ENCODE measurements at regions of chr10 and their contacts with region 1.

Region 1: GRCh38 chr10:102009801-102010425 is 46.1 kb downstream of the ARMH3 start:
- DNase-seq: no peak
- H3K4me3 ChIP-seq: no peak overlapping the region
- H3K27ac ChIP-seq: peak overlapping the region in 4 of 8 donors; percentile 7 to 37 (median 18)
- H3K4me1 ChIP-seq: peaks cover 4 to 61% (median 26%) of the 10 kb centered on the region in 6 donors
- H3K27me3 ChIP-seq: no peaks in the 10 kb centered on the region
- CTCF ChIP-seq: peak; percentile 78 to 92 (median 88)
- POLR2A ChIP-seq: no peak

Region 2: GRCh38 chr10:101840741-101841453 is 169.0 kb before region 1 on chr10:
- intact Hi-C with region 1: loop called (anchors 5 kb)
- DNase-seq: peak; percentile 96
- H3K4me3 ChIP-seq: peak overlapping the region in 7 of 8 donors; percentile 36 to 71 (median 47)
- H3K27ac ChIP-seq: peak overlapping the region in 2 of 8 donors; percentile 3 to 22
- H3K4me1 ChIP-seq: peaks cover 26 to 92% (median 56%) of the 10 kb centered on the region in 6 donors
- H3K27me3 ChIP-seq: peaks cover 0 to 7% (median 0%) of the 10 kb centered on the region in 7 donors
- CTCF ChIP-seq: peak; percentile 88 to 98 (median 95)
- POLR2A ChIP-seq: no peak

Region 3: DNA sequence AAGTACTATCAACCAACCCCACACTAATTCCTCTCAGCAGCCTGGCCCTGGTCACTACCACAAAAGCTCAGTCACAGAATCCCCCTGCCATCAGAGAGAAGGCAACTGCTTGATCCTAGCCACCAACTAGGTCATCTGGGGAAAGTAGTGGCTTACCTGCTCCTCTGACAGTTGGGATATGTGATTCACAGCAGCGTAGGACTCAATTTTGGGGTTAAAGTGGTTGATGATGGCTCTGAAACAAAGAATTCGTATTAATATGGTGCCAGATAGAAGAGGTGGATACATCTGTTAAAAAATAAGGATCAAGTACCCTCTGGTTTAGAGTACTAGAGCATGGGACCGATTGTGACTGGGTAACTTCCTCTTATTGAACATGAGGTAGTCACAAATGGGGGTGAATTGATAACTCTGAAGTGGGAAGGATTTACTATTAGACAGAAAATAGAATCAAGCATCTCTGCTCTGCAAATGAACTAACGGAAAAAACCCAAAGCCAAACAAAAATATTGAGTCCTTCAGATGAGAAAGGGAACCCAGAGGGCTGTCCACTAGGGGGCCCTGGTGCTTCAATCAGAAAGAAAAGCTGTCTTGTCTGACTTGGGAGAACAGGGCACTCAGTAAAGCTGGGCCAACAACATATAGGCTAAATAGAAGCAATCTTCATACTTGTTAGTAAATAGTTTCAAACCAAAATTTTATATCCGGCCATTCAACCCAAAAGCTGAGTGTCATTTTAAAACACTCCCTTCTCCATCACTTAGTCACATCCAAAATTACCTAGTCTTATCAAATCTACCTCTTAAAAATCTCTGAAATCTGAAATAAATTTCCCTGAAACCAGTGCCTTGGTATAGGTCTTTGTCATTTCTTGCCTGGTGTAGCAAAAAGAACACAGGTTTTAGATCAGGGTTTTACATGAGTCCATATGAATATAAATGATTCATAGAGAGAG is 120.4 kb before region 1 on chr10:
- intact Hi-C with region 1: loop called (anchors 5 kb)
- DNase-seq: peak; percentile 84
- H3K4me3 ChIP-seq: no peak overlapping the region
- H3K27ac ChIP-seq: peak overlapping the region in 3 of 8 donors; percentile 7 to 64 (median 19)
- H3K4me1 ChIP-seq: peaks cover 0 to 51% (median 14%) of the 10 kb centered on the region in 6 donors
- H3K27me3 ChIP-seq: no peaks in the 10 kb centered on the region
- CTCF ChIP-seq: peak; percentile 55 to 86 (median 76)
- POLR2A ChIP-seq: no peak

Region 4: DNA sequence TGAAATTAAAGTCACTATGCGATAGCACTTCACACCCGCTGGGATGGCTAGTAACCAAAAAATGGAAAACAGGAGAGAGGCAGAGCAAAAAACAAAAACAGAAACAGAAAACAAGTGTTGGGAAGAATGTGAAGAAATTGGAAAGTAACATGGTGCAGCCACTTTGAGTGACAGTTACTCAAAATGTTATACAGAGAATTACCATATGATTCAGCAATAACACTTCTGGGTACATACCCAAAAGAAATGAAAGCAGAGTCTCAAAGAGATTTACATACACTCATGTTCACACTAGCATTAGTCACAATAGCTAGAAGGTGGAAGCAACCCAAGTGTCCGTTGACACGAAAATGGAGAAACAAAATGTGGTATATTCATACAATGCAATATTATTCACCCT is 77.7 kb before region 1 on chr10:
- intact Hi-C with region 1: no loop called
- DNase-seq: no peak
- H3K4me3 ChIP-seq: no peak overlapping the region
- H3K27ac ChIP-seq: no peak overlapping the region
- H3K4me1 ChIP-seq: peaks cover 0 to 23% (median 1%) of the 10 kb centered on the region in 6 donors
- H3K27me3 ChIP-seq: no peaks in the 10 kb centered on the region
- CTCF ChIP-seq: no peak
- POLR2A ChIP-seq: no peak

Region 5: GRCh38 chr10:102114861-102115618 is 105.1 kb after region 1 on chr10:
- intact Hi-C with region 1: no loop called
- DNase-seq: peak; percentile 98
- H3K4me3 ChIP-seq: peak overlapping the region; percentile 59 to 97 (median 75)
- H3K27ac ChIP-seq: peak overlapping the region; percentile 55 to 99 (median 96)
- H3K4me1 ChIP-seq: peaks cover 55 to 86% (median 71%) of the 10 kb centered on the region in 6 donors
- H3K27me3 ChIP-seq: no peaks in the 10 kb centered on the region
- CTCF ChIP-seq: peak in 1 of 11 experiments; percentile 19
- POLR2A ChIP-seq: peak in 1 of 3 donors; percentile 34

Measured in spleen (tissue), 13 donors.